Heart right ventricle (tissue), 16 donors: ENCODE measurements at regions of chr13 and their contacts with region 1.

Region 1: GRCh38 chr13:21998279-21998990 is 327.6 kb downstream of the FGF9 start:
- DNase-seq: no peak
- ATAC-seq: no peak
- H3K4me3 ChIP-seq: no peak overlapping the region
- H3K27ac ChIP-seq: no peak overlapping the region
- H3K4me1 ChIP-seq: no peaks in the 10 kb centered on the region
- H3K27me3 ChIP-seq: peaks cover 0 to 11% (median 0%) of the 10 kb centered on the region in 7 donors
- CTCF ChIP-seq: no peak

Region 2: GRCh38 chr13:22040810-22041371 is 42.5 kb after region 1 on chr13:
- intact Hi-C with region 1: loop called in 1 of 10 experiments (anchors 2 kb)
- DNase-seq: no peak
- ATAC-seq: no peak
- H3K4me3 ChIP-seq: peak overlapping the region in 4 of 10 donors; percentile 3 to 19 (median 10)
- H3K27ac ChIP-seq: no peak overlapping the region
- H3K4me1 ChIP-seq: no peaks in the 10 kb centered on the region
- H3K27me3 ChIP-seq: no peaks in the 10 kb centered on the region
- CTCF ChIP-seq: no peak